Mammary epithelial cell (primary cell): ENCODE measurements at regions of chr16 and their contacts with region 1.

Region 1: GRCh38 chr16:57834936-57835335 is 32.6 kb upstream of the KIFC3 start:
- DNase-seq: peak; percentile 84
- H3K4me3 ChIP-seq: peak overlapping the region; percentile 12 to 44 (median 25)
- H3K27ac ChIP-seq: peak overlapping the region; percentile 97
- H3K4me1 ChIP-seq: peaks cover 12% of the 10 kb centered on the region
- H3K27me3 ChIP-seq: no peaks in the 10 kb centered on the region
- CTCF ChIP-seq: no peak

Region 2: GRCh38 chr16:57764341-57765159 is 70.4 kb before region 1 on chr16:
- CTCF ChIA-PET with region 1: no interaction called
- dilution Hi-C with region 1: no loop called
- in situ Hi-C with region 1: no loop called
- intact Hi-C with region 1: loop called (anchors 2 kb)
- DNase-seq: peak; percentile 90
- H3K4me3 ChIP-seq: no peak overlapping the region
- H3K27ac ChIP-seq: peak overlapping the region; percentile 60
- H3K4me1 ChIP-seq: peaks cover 17% of the 10 kb centered on the region
- H3K27me3 ChIP-seq: no peaks in the 10 kb centered on the region
- CTCF ChIP-seq: no peak

Region 3: DNA sequence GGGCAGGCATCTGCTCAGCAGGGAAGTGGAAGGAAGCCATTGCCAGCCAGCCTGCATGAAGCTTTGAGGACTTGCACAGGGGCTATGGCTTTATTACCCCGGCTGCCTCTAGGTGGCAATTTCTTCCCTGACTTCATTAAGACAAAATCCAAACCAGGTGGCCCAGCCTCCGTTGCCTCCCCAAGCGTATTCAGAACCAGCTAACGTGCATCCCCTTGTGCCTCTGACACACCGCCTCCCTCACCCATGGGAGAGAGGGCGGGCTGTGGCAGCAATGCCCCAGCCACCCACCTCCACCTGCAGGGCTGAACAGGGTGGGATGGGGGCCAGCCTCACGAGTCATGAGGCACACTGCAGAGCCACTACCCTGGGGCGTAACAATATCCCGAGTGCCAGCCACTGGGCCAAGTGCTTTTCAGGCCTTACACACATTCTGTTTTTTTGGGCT is 39.5 kb before region 1 on chr16:
- CTCF ChIA-PET with region 1: no interaction called
- dilution Hi-C with region 1: loop called (anchors 5 kb)
- in situ Hi-C with region 1: no loop called
- intact Hi-C with region 1: no loop called
- DNase-seq: peak; percentile 71
- H3K4me3 ChIP-seq: no peak overlapping the region
- H3K27ac ChIP-seq: no peak overlapping the region
- H3K4me1 ChIP-seq: peaks cover 36% of the 10 kb centered on the region
- H3K27me3 ChIP-seq: no peaks in the 10 kb centered on the region
- CTCF ChIP-seq: peak; percentile 37 to 70

Region 4: DNA sequence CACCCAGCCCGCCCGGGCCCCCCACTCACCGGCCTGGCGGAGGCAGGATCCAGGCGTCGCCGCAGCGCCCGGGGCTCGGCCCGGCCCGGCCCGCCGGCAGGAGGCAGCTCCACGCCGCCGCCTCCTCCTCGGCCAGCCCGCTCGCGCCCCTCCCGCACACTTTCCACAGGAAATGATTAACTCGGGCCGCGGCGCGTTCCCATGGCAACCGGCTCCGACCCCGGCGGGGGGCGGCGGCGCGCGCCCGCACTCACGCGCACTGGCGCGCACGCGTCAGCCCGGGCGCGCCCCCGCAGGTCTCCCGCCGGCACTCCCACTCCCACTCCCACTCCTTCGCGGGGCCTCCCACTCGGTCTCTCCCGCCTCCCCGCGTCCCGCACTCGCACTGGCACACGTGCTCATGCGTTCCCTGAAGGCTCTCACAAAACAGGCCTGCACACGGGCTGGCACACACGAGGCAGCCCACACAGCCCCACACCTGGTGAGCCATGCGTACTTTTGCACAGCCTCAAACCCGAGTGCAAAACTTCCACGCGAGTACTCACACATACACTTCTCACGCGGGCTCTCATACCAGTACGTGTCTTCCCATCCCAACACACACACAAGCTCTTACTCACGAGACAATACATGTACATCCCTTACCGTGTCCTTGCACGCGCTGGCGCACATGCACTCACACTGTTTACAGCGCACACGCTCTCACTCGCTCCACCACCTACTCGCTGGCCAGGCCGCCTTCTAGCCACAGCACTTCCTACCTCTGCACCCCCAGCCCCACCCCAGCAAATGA is 32.4 kb before region 1 on chr16 and contains the start of gene KIFC3:
- CTCF ChIA-PET with region 1: no interaction called
- dilution Hi-C with region 1: loop called (anchors 5 kb)
- in situ Hi-C with region 1: no loop called
- intact Hi-C with region 1: loop called (anchors 1 kb)
- DNase-seq: peak; percentile 55
- H3K4me3 ChIP-seq: peak within 1 kb of the TSS; percentile 44 to 66 (median 65)
- H3K27ac ChIP-seq: peak within 1 kb of the TSS; percentile 78
- H3K4me1 ChIP-seq: peaks cover 49% of the 10 kb centered on the region
- H3K27me3 ChIP-seq: no peaks in the 10 kb centered on the region
- CTCF ChIP-seq: no peak
- total RNA-seq, gene KIFC3: 35.8 to 59.8 TPM

Region 5: GRCh38 chr16:57816334-57816745 is 18.6 kb before region 1 on chr16:
- CTCF ChIA-PET with region 1: no interaction called
- dilution Hi-C with region 1: no loop called
- in situ Hi-C with region 1: no loop called
- intact Hi-C with region 1: loop called (anchors 1 kb)
- DNase-seq: peak; percentile 98
- H3K4me3 ChIP-seq: no peak overlapping the region
- H3K27ac ChIP-seq: peak overlapping the region; percentile 85
- H3K4me1 ChIP-seq: peaks cover 41% of the 10 kb centered on the region
- H3K27me3 ChIP-seq: no peaks in the 10 kb centered on the region
- CTCF ChIP-seq: no peak

Region 6: DNA sequence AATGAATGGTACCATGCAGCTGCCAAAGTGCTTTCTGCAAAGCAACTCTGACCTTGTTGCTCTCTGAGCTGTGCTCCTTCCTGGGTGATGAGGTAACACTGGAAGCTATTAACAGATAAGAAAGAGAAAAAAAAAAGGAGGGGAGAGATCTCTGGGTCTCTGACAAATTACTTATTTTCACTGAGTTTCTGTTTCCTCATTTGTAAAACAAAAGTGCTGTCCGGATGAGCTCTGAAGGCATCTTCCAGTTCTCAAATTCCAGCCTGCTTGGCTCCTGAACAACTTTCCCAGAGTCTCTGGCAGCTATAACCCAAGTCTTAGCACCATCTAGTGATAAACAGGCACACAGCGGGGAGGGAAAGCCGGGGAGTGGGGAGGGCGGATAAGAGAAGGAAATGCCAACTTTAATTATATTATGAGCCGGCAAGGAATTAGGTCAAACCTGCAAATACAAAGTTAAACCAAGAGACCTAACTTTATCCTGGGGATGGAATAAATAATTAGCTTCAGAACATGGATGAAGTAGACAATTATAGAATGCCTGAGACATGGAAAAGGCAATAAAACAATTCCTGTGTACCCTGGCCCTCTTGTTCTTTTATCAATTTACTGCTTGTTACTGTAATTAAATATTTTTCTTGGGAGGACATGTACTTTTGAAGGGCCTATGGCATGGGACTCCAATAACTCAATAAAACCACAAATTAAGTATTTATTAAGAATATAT is 28.7 kb after region 1 on chr16:
- CTCF ChIA-PET with region 1: no interaction called
- dilution Hi-C with region 1: loop called (anchors 5 kb)
- in situ Hi-C with region 1: no loop called
- intact Hi-C with region 1: no loop called
- DNase-seq: peak; percentile 45
- H3K4me3 ChIP-seq: no peak overlapping the region
- H3K27ac ChIP-seq: no peak overlapping the region
- H3K4me1 ChIP-seq: peaks cover 13% of the 10 kb centered on the region
- H3K27me3 ChIP-seq: no peaks in the 10 kb centered on the region
- CTCF ChIP-seq: peak; percentile 59 to 86

Region 7: DNA sequence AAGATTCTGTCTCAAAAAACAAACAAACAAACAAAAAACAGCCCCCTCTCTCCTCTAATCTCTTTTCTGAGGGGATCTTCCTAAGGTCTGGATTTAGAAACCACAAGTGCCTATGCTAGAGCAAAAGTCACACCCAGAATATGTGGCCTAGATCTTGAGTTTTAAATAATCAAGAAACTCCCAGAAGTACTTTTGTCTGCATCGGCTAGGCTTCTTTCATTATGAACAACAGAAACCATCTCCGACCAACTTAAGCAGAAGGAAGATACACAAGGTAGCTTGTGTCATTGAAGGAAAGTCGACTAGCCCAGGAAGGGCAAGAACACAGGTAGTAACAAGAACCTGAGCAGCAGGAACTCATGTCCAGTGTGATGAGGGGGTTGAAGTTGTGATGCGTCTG is 41.3 kb after region 1 on chr16:
- CTCF ChIA-PET with region 1: no interaction called
- dilution Hi-C with region 1: no loop called
- in situ Hi-C with region 1: no loop called
- intact Hi-C with region 1: no loop called
- DNase-seq: no peak
- H3K4me3 ChIP-seq: no peak overlapping the region
- H3K27ac ChIP-seq: no peak overlapping the region
- H3K4me1 ChIP-seq: peaks cover 7% of the 10 kb centered on the region
- H3K27me3 ChIP-seq: peaks cover 2% of the 10 kb centered on the region
- CTCF ChIP-seq: no peak

Region 8: GRCh38 chr16:57916735-57917451 is 82.0 kb after region 1 on chr16:
- CTCF ChIA-PET with region 1: no interaction called
- dilution Hi-C with region 1: loop called (anchors 5 kb)
- in situ Hi-C with region 1: no loop called
- intact Hi-C with region 1: no loop called
- DNase-seq: peak; percentile 89
- H3K4me3 ChIP-seq: peak overlapping the region in 1 of 3 experiments; percentile 37
- H3K27ac ChIP-seq: peak overlapping the region; percentile 50
- H3K4me1 ChIP-seq: peaks cover 31% of the 10 kb centered on the region
- H3K27me3 ChIP-seq: no peaks in the 10 kb centered on the region
- CTCF ChIP-seq: no peak